Posterior vena cava (tissue), 2 donors: ENCODE measurements at regions of chr6 and their contacts with region 1.

Region 1: DNA sequence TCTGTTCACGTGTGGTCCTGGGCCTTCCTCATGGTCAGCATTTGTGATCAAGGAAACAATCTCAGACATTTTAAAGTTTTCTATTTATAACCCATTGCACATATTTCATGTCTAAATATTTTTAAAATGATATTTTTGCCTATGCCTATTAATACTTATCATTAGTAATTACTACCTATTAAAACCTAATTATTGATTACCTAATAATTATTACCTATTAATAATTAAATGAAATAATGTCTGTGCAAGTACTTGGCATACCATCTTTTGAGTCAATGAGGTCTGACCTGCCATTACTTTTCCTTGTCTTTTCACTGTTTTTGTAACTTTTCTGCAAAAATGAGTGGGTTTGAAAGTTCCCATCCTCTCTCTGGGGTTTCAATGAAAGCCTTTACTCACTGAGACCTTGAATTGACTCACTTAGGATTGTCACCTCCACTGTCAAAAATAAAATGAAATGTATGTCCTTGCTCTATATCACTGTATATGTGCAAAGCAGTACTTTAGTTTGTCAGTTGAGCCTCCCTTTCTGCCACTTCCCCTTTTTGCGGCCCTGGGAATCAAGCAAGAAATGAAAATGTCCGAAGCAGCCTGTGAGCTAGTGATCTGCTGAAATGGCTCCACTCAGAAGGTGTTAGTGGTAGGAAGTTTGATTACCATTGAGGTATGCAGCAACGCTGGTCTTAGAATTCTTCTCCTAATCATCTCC is 87.8 kb downstream of the L3MBTL3 start:
- DNase-seq: no peak

Region 2: GRCh38 chr6:130054725-130055124 is 51.4 kb before region 1 on chr6:
- intact Hi-C with region 1: loop called in 1 of 2 experiments (anchors 5 kb)
- DNase-seq: no peak